CD4-positive, alpha-beta T cell (primary cell): ENCODE measurements at regions of chr18 and their contacts with region 1.

Region 1: GRCh38 chr18:2060086-2060485 is 511.2 kb downstream of the METTL4 start:
- DNase-seq: no peak
- ATAC-seq: no peak
- H3K4me3 ChIP-seq: no peak overlapping the region
- H3K4me3 Mint-ChIP-seq: no peak overlapping the region
- H3K27ac ChIP-seq: no peak overlapping the region
- H3K27ac Mint-ChIP-seq: no peak overlapping the region
- H3K4me1 ChIP-seq: no peaks in the 10 kb centered on the region
- H3K4me1 Mint-ChIP-seq: no peaks in the 10 kb centered on the region
- H3K27me3 ChIP-seq: no peaks in the 10 kb centered on the region
- H3K27me3 Mint-ChIP-seq: peaks cover 8% of the 10 kb centered on the region
- CTCF ChIP-seq: no peak

Region 2: DNA sequence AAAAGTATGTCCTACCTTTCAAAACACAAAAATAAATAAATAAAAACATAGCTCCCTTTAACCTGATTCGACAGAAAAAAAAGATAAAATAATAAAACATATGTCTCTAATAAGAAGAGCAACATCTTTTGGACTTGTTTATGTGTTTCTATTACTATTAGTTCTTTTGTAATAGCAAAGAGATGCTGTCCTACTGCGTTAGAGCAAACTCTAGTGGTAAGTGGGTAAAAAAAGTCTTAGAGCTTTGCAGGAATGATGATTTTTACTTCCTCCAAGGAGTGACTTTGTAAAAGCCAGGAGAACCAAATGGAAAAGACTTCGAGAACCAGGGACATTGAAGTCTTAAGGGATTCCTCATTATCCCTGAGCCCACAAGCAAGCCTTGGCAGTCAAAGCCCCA is 61.1 kb after region 1 on chr18:
- CTCF ChIA-PET with region 1: no interaction called
- POLR2A ChIA-PET with region 1: no interaction called
- intact Hi-C with region 1: loop called in 1 of 2 experiments (anchors 10 kb)
- DNase-seq: no peak
- ATAC-seq: no peak
- H3K4me3 ChIP-seq: no peak overlapping the region
- H3K4me3 Mint-ChIP-seq: no peak overlapping the region
- H3K27ac ChIP-seq: no peak overlapping the region
- H3K27ac Mint-ChIP-seq: no peak overlapping the region
- H3K4me1 ChIP-seq: no peaks in the 10 kb centered on the region
- H3K4me1 Mint-ChIP-seq: no peaks in the 10 kb centered on the region
- H3K27me3 ChIP-seq: no peaks in the 10 kb centered on the region
- H3K27me3 Mint-ChIP-seq: no peaks in the 10 kb centered on the region
- CTCF ChIP-seq: no peak